CD14-positive monocyte (primary cell): ENCODE measurements at regions of chr10 and their contacts with region 1.

Region 1: GRCh38 chr10:112721080-112721698 is 228.9 kb upstream of the TCF7L2 start:
- DNase-seq: peak; percentile 28 to 47 (median 44)
- H3K4me3 ChIP-seq: no peak overlapping the region
- H3K4me3 Mint-ChIP-seq: no peak overlapping the region
- H3K27ac ChIP-seq: no peak overlapping the region
- H3K27ac Mint-ChIP-seq: no peak overlapping the region
- H3K4me1 ChIP-seq: no peaks in the 10 kb centered on the region
- H3K4me1 Mint-ChIP-seq: no peaks in the 10 kb centered on the region
- H3K27me3 ChIP-seq: no peaks in the 10 kb centered on the region
- H3K27me3 Mint-ChIP-seq: peaks cover 0 to 3% (median 0%) of the 10 kb centered on the region in 3 donors
- CTCF ChIP-seq: peak; percentile 76

Region 2: GRCh38 chr10:113108212-113108835 is 387.1 kb after region 1 on chr10:
- intact Hi-C with region 1: loop called in 1 of 2 experiments (anchors 5 kb)
- DNase-seq: peak in 2 of 3 donors; percentile 33 to 50
- H3K4me3 ChIP-seq: no peak overlapping the region
- H3K4me3 Mint-ChIP-seq: no peak overlapping the region
- H3K27ac ChIP-seq: no peak overlapping the region
- H3K27ac Mint-ChIP-seq: peak overlapping the region in 1 of 7 donors; percentile 14
- H3K4me1 ChIP-seq: peaks cover 0 to 6% of the 10 kb centered on the region in 2 donors
- H3K4me1 Mint-ChIP-seq: peaks cover 9% of the 10 kb centered on the region
- H3K27me3 ChIP-seq: no peaks in the 10 kb centered on the region
- H3K27me3 Mint-ChIP-seq: peaks cover 4 to 8% (median 6%) of the 10 kb centered on the region in 3 donors
- CTCF ChIP-seq: peak; percentile 88

Region 3: GRCh38 chr10:113126229-113127201 is 405.3 kb after region 1 on chr10:
- intact Hi-C with region 1: loop called (anchors 5 to 10 kb)
- DNase-seq: peak; percentile 49 to 74 (median 60)
- H3K4me3 ChIP-seq: peak overlapping the region in 1 of 3 experiments; percentile 31
- H3K4me3 Mint-ChIP-seq: peak overlapping the region; percentile 45 to 83
- H3K27ac ChIP-seq: no peak overlapping the region
- H3K27ac Mint-ChIP-seq: peak overlapping the region in 2 of 7 donors; percentile 6 to 55
- H3K4me1 ChIP-seq: peaks cover 5 to 20% of the 10 kb centered on the region in 2 donors
- H3K4me1 Mint-ChIP-seq: peaks cover 17% of the 10 kb centered on the region
- H3K27me3 ChIP-seq: peaks cover 17 to 20% of the 10 kb centered on the region in 2 donors
- H3K27me3 Mint-ChIP-seq: peaks cover 17 to 50% (median 44%) of the 10 kb centered on the region in 3 donors
- CTCF ChIP-seq: peak; percentile 84

Region 4: DNA sequence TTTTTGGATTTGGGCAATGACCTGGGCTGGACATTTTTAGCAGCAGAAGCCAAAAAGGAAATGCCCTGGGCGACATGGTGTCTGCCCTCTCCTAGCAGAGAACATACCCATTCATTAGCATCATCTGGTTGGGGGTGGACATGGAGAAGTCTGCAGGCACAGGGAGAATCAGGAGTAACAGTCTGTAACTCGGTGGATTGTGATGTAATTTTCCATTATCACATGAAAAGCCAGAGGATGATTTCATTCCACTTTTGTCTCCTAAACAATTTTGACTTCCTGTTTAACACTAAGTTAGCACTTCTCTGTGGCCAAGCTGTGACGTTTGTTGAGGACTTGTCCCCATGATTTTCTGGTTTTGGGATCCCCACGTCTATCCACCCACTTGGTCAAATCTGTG is 677.9 kb after region 1 on chr10:
- intact Hi-C with region 1: loop called in 1 of 2 experiments (anchors 10 kb)
- DNase-seq: no peak
- H3K4me3 ChIP-seq: no peak overlapping the region
- H3K4me3 Mint-ChIP-seq: no peak overlapping the region
- H3K27ac ChIP-seq: no peak overlapping the region
- H3K27ac Mint-ChIP-seq: peak overlapping the region in 1 of 7 donors; percentile 49
- H3K4me1 ChIP-seq: peaks cover 0 to 4% of the 10 kb centered on the region in 2 donors
- H3K4me1 Mint-ChIP-seq: peaks cover 17% of the 10 kb centered on the region
- H3K27me3 ChIP-seq: no peaks in the 10 kb centered on the region
- H3K27me3 Mint-ChIP-seq: peaks cover 1 to 2% (median 1%) of the 10 kb centered on the region in 3 donors
- CTCF ChIP-seq: no peak